Heart right ventricle (tissue), 16 donors: ENCODE measurements at regions of chr16 and their contacts with region 1.

Region 1: DNA sequence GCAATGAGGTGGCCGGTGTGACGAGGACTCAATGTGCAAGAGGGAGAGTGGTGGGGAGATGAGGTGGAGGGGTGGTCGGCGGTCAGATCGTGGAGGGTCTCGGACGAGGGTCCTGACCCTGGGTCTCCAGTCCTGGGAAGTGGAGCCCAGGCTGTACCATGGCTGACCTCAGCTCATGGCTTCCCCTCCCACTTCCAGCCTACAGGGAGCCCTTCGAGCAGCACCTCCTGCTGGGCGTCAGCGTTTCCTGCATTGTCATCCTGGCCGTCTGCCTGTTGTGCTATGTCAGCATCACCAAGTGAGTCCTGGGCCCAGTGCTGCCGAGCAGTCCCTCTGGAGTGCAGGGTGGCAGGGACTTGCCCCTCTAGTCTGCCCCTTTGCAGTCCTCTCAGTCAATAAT is 41.8 kb downstream of the IL4R start:
- DNase-seq: peak; percentile 43 to 56
- ATAC-seq: peak in 5 of 8 donors; percentile 41 to 74 (median 62)
- H3K4me3 ChIP-seq: no peak overlapping the region
- H3K27ac ChIP-seq: no peak overlapping the region
- H3K4me1 ChIP-seq: no peaks in the 10 kb centered on the region
- H3K27me3 ChIP-seq: no peaks in the 10 kb centered on the region
- CTCF ChIP-seq: peak in 7 of 9 donors; percentile 27 to 53 (median 39)

Region 2: GRCh38 chr16:27304881-27305745 is 50.5 kb before region 1 on chr16:
- intact Hi-C with region 1: loop called in 2 of 10 experiments (anchors 10 kb)
- DNase-seq: no peak
- ATAC-seq: peak in 1 of 8 donors; percentile 42
- H3K4me3 ChIP-seq: no peak overlapping the region
- H3K27ac ChIP-seq: peak overlapping the region in 1 of 10 donors; percentile 59
- H3K4me1 ChIP-seq: peaks cover 0 to 23% (median 0%) of the 10 kb centered on the region in 9 donors
- H3K27me3 ChIP-seq: no peaks in the 10 kb centered on the region
- CTCF ChIP-seq: no peak